ENCODE measurements at regions of chr5 and their contacts with region 1.

Region 1: GRCh38 chr5:172932313-172933017 is 26.8 kb upstream of the RPL26L1 start:
- DNase-seq: no peak
- H3K4me3 ChIP-seq: no peak overlapping the region
- CTCF ChIP-seq: peak; percentile 95

Region 2: GRCh38 chr5:172721301-172722130 is 210.9 kb before region 1 on chr5:
- CTCF ChIA-PET with region 1: interaction called, 167 read pairs
- POLR2A ChIA-PET with region 1: no interaction called
- DNase-seq: no peak
- H3K4me3 ChIP-seq: no peak overlapping the region
- CTCF ChIP-seq: no peak

Region 3: GRCh38 chr5:172758083-172758833 is 174.2 kb before region 1 on chr5:
- CTCF ChIA-PET with region 1: interaction called, 14 read pairs
- POLR2A ChIA-PET with region 1: no interaction called
- DNase-seq: peak; percentile 88
- H3K4me3 ChIP-seq: no peak overlapping the region
- CTCF ChIP-seq: no peak

Region 4: DNA sequence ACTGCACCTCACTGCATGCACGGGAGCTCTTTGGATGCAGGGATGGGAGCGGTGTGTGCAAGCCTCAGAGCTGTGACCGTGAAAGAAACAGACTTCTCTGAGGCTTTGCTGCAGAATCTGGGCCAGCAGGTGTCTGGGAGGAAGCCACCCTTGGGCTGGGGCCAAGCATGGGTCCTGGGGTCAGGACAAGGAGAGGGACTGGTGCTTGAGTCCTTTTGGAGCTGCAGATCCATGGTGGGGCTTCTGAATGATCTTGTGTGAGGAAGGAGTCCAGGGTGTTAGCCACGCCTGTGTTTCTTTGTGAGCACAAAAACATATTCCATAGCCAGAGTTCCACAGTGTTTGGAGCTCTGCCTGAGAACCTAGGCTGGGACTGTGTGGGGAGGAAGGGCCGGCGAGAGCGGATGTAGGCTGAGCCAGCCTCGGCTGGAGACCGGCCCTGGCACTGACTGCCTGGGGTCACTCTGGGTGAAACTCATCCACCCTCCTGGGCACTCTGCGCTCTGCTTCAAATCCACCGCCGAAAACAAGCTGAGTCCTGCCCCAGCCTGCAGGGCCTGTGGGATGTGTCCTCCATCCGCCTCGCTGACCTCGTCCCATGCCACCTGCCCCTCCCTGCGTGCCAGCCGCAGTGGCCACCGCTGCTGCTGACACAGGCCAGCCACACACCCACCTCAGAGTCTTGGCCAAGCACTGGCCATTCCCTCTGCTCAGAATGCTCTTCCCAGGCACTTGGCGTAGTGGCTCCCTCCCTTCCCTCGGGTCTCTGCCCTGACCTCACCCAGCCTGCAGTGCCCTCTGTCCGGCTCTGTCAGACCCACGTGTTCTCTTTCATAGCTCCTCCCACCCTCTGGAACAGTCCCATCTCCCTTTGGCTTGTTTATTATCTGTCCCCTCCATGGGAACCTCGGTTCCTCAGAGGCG is 71.7 kb before region 1 on chr5:
- CTCF ChIA-PET with region 1: interaction called, 21 read pairs
- POLR2A ChIA-PET with region 1: no interaction called
- DNase-seq: no peak
- H3K4me3 ChIP-seq: no peak overlapping the region
- CTCF ChIP-seq: no peak

Region 5: DNA sequence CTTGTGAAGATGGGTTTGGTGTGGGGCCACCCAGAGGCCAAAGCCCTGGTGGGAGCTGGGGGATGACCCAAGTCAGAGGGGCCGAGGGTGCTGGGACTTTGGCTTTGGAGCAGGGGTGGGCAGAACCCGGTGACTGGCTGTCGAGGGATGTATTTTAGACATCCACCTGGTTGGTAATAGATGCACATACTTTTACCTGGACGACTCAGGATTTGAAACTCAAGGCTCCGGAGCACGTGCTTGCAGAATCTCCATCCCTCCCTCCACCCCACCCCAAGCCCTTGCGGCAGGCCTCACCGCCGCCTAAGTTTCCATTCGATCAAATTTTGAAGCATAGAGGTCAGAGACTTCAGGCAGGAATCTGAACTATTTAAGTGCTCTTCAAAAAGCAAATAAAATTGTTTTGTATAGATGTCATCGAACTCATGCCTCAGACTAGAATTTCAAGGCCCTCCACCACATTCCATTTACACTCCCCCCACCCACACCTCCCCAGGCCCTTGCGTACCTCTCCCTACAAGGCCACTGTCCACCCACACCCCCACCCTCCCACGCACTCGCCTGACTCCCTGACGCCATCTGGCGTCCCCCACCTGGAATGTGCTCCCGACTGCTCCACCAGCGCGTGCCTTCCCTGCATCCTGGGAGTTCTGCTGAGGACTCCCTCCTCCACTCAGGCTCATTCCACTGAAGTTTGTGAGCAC is 29.8 kb before region 1 on chr5:
- CTCF ChIA-PET with region 1: interaction called, 88 read pairs
- POLR2A ChIA-PET with region 1: interaction called, 7 read pairs
- DNase-seq: peak; percentile 99
- H3K4me3 ChIP-seq: no peak overlapping the region
- CTCF ChIP-seq: peak; percentile 86

Region 6: GRCh38 chr5:172920447-172920849 is 12.0 kb before region 1 on chr5:
- CTCF ChIA-PET with region 1: interaction called, 21 read pairs
- POLR2A ChIA-PET with region 1: interaction called, 4 read pairs
- DNase-seq: peak; percentile 96
- H3K4me3 ChIP-seq: no peak overlapping the region
- CTCF ChIP-seq: no peak